Psoas muscle (tissue), 8 donors: ENCODE measurements at regions of chr5 and their contacts with region 1.

Region 1: DNA sequence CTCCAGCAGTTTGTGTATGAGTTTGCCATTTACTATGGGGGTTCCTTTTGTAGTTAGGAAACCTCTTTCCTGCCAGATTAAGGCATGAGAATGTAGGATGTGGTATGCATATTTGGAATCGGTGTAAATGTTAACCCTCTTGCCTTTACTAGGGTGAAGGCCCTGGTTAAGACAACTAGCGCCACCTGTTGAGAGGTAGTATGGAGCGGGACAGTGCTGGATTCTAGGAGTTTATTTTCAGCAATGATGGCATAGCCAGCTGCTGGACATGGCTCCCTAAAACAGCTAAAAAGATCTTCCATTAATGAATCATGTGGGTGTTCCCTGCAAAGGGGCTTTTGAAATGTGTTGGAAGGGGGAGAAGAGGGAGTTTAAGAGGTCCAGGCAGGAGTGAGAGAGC is 30.7 kb upstream of the GPX3 start:
- DNase-seq: no peak
- ATAC-seq: peak in 1 of 4 donors; percentile 39
- H3K4me3 ChIP-seq: no peak overlapping the region
- H3K27ac ChIP-seq: no peak overlapping the region
- H3K4me1 ChIP-seq: no peaks in the 10 kb centered on the region
- H3K27me3 ChIP-seq: no peaks in the 10 kb centered on the region
- CTCF ChIP-seq: no peak

Region 2: DNA sequence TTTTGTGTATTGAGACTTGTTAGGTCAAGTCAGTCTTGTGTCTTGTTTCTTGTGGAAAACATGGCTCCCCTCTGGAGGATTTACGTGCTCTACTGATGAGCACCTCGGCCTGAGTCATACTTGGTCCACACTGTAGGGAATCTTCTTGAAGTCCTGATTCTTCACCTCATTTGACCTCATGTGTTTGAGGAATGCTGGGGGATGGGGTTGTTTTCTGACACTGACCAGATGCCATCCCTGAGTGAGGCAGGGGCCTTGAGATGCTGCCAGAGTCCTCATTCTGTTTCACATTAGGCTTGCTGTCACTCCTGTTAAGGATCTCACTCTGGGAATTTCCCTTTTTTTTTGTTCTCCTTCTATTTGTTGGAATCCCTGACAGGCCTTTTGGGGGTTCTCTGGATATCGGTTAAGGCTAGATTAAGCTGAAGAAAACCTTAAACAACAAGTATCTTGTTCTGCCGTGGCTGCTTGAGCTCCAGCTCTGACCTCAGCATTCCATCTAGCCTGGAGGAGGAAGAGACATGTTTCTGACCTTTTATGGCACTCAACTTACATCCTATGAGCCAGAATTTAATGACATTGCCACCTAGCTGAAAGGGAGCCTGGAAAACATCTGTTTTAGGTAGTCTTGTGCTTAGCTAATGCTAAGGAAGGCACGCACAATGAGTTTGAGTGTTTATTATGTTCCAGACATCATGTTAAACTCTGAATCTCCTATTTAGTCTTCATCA is 611.6 kb before region 1 on chr5:
- intact Hi-C with region 1: loop called in 1 of 2 experiments (anchors 10 kb)
- DNase-seq: no peak
- ATAC-seq: no peak
- H3K4me3 ChIP-seq: no peak overlapping the region
- H3K27ac ChIP-seq: no peak overlapping the region
- H3K4me1 ChIP-seq: no peaks in the 10 kb centered on the region
- H3K27me3 ChIP-seq: no peaks in the 10 kb centered on the region
- CTCF ChIP-seq: no peak

Region 3: DNA sequence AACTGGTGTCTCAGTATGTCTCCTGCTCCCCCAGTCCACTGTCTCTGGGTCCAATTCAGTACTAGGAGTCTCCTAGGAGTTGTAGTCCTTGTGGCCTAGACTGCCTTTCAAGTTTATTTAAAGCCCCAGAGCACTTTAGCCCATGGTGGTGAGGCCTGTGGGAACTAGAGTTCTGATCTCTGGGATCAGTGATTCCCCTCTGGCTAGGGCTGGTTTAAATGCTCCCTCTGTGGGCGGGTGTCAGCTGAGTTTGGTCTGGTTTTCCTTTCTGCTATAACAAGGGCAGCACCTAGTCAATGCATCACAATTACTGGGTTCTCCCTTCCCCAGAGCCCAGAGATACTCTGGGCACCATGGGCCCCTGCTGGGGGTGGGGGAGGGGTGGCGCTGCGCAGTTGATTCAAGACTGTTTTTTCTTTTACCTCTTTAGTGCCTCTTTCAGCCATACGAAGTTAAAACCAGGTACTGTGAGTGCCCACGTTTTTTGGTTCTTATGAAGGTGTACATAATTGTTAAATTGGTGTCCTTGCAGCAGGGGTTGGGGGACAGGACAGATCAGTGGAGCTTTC is 323.1 kb after region 1 on chr5:
- intact Hi-C with region 1: no loop called
- DNase-seq: no peak
- ATAC-seq: peak in 2 of 4 donors; percentile 16 to 31
- H3K4me3 ChIP-seq: no peak overlapping the region
- H3K27ac ChIP-seq: no peak overlapping the region
- H3K4me1 ChIP-seq: no peaks in the 10 kb centered on the region
- H3K27me3 ChIP-seq: peaks cover 0 to 3% (median 0%) of the 10 kb centered on the region in 3 donors
- CTCF ChIP-seq: no peak